ENCODE measurements at regions of chr6 and their contacts with region 1.

Region 1: DNA sequence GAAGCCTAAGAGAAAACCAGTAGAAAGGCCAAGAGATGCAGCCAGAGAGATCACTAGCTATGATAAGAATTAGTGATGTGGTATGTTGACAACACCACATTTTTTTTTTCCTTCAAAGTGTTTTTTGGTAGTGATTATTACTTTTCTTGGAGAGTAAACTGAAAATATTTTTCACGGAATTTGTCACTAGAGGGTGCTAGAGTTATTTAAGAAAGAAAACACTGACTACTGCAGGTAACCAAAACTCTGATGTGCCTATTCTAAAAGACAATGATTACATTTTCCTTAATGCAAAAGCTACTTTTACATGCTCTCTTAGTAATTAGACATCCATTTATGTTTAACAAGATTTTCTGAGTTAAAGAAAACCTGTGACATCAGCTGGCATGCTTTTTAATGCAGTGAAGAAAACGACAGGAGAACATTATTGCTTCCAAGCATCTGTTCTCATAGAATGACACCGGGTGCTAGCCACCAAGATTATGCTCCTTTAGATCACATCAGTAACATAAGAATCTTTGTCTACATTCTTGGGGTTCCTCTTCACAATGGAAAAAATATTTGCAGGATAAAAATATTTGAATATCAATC is 28.8 kb downstream of the RWDD2A start:
- H3K4me3 ChIP-seq: no peak overlapping the region
- H3K27ac ChIP-seq: no peak overlapping the region
- H3K4me1 ChIP-seq: no peaks in the 10 kb centered on the region
- CTCF ChIP-seq: peak; percentile 48; the same call in 1 of the 2 replicates

Region 2: GRCh38 chr6:82507112-82507511 is 714.9 kb before region 1 on chr6:
- CTCF ChIA-PET with region 1: no interaction called
- POLR2A ChIA-PET with region 1: no interaction called
- H3K4me3 ChIP-seq: no peak overlapping the region
- H3K27ac ChIP-seq: no peak overlapping the region
- H3K4me1 ChIP-seq: no peaks in the 10 kb centered on the region
- CTCF ChIP-seq: no peak

Region 3: GRCh38 chr6:82687855-82688254 is 534.1 kb before region 1 on chr6:
- CTCF ChIA-PET with region 1: no interaction called
- POLR2A ChIA-PET with region 1: no interaction called
- H3K4me3 ChIP-seq: no peak overlapping the region
- H3K27ac ChIP-seq: no peak overlapping the region
- H3K4me1 ChIP-seq: no peaks in the 10 kb centered on the region
- CTCF ChIP-seq: no peak

Region 4: GRCh38 chr6:83199863-83200225 is 22.1 kb before region 1 on chr6:
- CTCF ChIA-PET with region 1: interaction called, 10 read pairs
- POLR2A ChIA-PET with region 1: no interaction called
- H3K4me3 ChIP-seq: no peak overlapping the region
- H3K27ac ChIP-seq: no peak overlapping the region
- H3K4me1 ChIP-seq: no peaks in the 10 kb centered on the region
- CTCF ChIP-seq: no peak

Region 5: GRCh38 chr6:83417880-83418663 is 196.1 kb after region 1 on chr6:
- CTCF ChIA-PET with region 1: interaction called, 17 read pairs
- POLR2A ChIA-PET with region 1: no interaction called
- H3K4me3 ChIP-seq: no peak overlapping the region
- H3K27ac ChIP-seq: no peak overlapping the region
- H3K4me1 ChIP-seq: no peaks in the 10 kb centered on the region
- CTCF ChIP-seq: no peak

Region 6: DNA sequence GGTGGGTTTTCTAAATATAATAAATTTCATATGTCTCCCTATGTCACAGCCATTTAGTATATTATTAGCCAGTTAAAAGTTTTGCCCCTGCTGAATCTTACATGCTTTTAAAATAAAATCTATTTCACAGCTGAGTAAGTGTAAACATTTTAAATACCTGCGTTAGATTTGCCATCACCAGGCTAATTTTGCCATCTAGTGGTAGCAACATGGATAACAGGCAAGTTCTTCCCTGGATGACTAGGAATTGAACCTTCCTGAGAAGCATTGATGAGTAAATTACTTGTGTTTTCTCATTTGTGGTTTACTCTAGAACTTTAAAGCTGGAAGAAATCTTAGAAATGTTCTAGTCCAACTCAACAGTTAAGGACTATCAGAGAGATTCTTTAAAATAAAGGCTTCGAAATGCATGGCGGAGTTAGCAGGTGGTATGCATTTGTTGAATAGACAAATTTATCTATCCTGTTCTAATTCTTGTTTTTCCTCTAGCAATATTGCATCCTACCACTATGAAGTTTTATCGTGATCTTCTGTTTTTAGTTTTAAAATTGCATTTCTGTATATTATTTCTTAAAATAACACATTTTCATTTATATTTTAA is 293.0 kb after region 1 on chr6:
- CTCF ChIA-PET with region 1: interaction called, 248 read pairs
- POLR2A ChIA-PET with region 1: interaction called, 3 read pairs
- H3K4me3 ChIP-seq: no peak overlapping the region
- H3K27ac ChIP-seq: no peak overlapping the region
- H3K4me1 ChIP-seq: no peaks in the 10 kb centered on the region
- CTCF ChIP-seq: peak; percentile 65

Measured in HEK293 (cell line).